Ascending aorta (tissue), 2 donors: ENCODE measurements at regions of chr3 and their contacts with region 1.

Region 1: GRCh38 chr3:130746246-130747039 is at the start of gene PIK3R4:
- DNase-seq: peak; percentile 93 to 98
- H3K4me3 ChIP-seq: peak within 1 kb of the TSS; percentile 83 to 95
- H3K27ac ChIP-seq: peak within 1 kb of the TSS; percentile 86 to 90
- H3K4me1 ChIP-seq: peaks cover 2 to 23% of the 10 kb centered on the region in 2 donors
- H3K27me3 ChIP-seq: no peaks in the 10 kb centered on the region
- CTCF ChIP-seq: no peak
- total RNA-seq, gene PIK3R4: 101 TPM

Region 2: GRCh38 chr3:130111185-130111864 is 635.1 kb before region 1 on chr3:
- intact Hi-C with region 1: loop called (anchors 5 kb)
- DNase-seq: peak; percentile 95 to 99
- H3K4me3 ChIP-seq: peak overlapping the region; percentile 82 to 87
- H3K27ac ChIP-seq: peak overlapping the region; percentile 72 to 80
- H3K4me1 ChIP-seq: peaks cover 0 to 2% of the 10 kb centered on the region in 2 donors
- H3K27me3 ChIP-seq: no peaks in the 10 kb centered on the region
- CTCF ChIP-seq: no peak

Region 3: DNA sequence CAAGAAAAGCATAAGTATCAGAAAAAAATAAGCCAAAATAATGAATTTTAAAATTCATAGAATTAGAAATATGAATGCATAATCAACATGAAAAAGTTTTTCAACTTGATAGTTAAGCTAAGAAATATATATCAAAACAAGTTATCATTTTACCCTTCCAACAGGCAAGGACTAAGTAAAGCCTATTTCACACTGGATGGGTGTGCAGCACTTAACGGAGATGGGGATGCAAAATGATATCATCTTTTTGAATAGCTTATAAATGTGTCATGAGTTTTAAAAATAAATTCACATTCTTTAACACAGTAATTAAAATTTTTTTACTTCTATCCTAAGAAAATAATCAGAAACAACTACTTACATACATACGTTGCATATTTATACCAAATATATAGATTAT is 20.7 kb before region 1 on chr3:
- intact Hi-C with region 1: loop called (anchors 2 kb)
- DNase-seq: no peak
- H3K4me3 ChIP-seq: no peak overlapping the region
- H3K27ac ChIP-seq: no peak overlapping the region
- H3K4me1 ChIP-seq: peaks cover 0 to 7% of the 10 kb centered on the region in 2 donors
- H3K27me3 ChIP-seq: no peaks in the 10 kb centered on the region
- CTCF ChIP-seq: no peak

Region 4: DNA sequence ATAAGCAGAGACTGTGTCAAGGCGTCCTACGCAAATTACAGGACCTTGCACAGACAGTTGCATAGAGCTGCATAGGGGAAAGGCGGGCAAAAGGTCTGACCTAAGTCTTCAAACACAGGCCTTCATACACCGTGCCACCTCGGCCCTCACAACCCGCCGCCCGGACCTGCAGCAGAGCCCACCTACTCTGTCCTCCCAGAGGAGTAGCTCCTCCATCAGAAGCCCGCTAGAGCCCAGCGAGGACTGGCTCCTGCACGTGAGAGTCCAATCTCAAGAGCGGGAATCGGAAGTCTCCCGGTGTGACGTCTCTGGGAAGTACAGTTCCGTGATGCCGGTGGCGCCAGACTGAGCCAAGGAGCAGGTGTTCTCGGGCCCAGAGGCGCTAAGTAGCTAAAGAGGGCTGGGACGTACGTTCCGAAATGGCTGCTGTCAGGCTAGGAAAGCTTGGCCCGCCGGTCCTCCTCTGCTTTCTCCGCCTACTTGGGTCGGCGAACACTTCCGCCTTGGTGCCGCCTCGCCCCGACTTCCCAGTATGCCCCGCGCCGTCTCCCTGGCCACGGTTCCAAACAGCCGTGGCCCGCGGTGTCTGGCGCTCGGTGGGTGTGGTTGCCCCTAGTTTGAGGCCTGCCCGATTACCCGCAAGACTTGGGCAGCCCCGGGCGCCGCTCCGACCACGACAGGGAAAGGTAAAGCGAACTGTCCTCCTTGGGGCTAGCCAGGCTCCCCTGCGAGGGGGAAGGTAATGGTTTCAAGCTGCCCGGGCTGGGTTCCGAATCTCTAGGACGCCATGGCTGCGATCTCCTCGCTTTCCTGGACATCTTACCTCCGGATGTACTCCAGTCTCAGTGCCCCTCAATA is 280.1 kb after region 1 on chr3 and contains the starts of genes ASTE1 and NEK11:
- intact Hi-C with region 1: loop called (anchors 5 kb)
- DNase-seq: peak; percentile 69 to 94
- H3K4me3 ChIP-seq: peak within 1 kb of the TSS; percentile 72 to 83
- H3K27ac ChIP-seq: peak within 1 kb of the TSS; percentile 77 to 86
- H3K4me1 ChIP-seq: peaks cover 0 to 18% of the 10 kb centered on the region in 2 donors
- H3K27me3 ChIP-seq: no peaks in the 10 kb centered on the region
- CTCF ChIP-seq: no peak
- total RNA-seq, gene ASTE1: 14.0 TPM
- total RNA-seq, gene NEK11: 4.0 TPM

Region 5: GRCh38 chr3:131502530-131503245 is 756.2 kb after region 1 on chr3 and contains the start of gene MRPL3:
- intact Hi-C with region 1: loop called (anchors 5 kb)
- DNase-seq: peak; percentile 57 to 90
- H3K4me3 ChIP-seq: peak within 1 kb of the TSS; percentile 82 to 96
- H3K27ac ChIP-seq: peak within 1 kb of the TSS; percentile 68
- H3K4me1 ChIP-seq: peaks cover 4 to 12% of the 10 kb centered on the region in 2 donors
- H3K27me3 ChIP-seq: no peaks in the 10 kb centered on the region
- CTCF ChIP-seq: no peak
- total RNA-seq, gene MRPL3: 45.7 TPM